AG04449 (cell line): ENCODE measurements at regions of chr7 and their contacts with region 1.

Region 1: DNA sequence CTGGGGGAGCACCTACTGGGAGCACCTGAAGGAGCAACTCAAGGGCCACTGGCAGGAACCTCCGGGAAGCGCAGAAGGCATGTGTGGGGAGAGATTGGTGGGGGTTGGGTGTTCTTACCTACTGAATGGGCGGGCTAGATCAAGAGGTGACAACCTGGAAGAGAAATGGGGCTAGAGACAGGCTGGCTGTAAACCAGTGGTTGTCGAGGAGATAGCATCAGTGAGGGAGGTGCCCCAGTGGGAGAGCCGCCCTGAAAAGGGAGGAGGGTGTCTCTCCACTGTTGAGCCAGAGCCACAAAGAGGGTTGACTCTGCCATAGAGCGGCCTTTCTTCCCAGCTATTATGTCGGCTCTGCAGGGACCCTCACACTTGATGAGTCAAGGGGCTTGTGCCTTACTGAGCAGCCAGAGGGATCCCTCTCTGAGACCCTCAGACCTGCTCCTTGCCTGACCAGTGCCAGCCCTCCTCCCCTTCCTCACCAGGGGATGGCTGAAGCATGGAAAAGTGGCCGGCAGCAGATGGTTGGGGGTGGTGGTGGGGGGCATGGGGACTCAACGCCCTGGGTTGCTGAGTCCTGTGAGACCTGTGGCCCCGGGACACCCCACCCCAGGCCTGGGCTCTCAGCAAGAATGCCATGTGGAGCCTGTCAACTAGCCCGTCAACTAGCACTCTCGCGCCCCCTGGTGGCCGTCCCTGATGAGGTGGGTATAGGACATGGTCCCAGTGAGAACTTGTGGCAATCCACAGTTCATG is 36.5 kb upstream of the PURB start:
- DNase-seq: no peak
- H3K4me3 ChIP-seq: no peak overlapping the region
- CTCF ChIP-seq: peak; percentile 92

Region 2: GRCh38 chr7:44145969-44146911 is 775.5 kb before region 1 on chr7:
- CTCF ChIA-PET with region 1: no interaction called
- POLR2A ChIA-PET with region 1: no interaction called
- DNase-seq: no peak
- H3K4me3 ChIP-seq: peak overlapping the region; percentile 49
- CTCF ChIP-seq: no peak

Region 3: GRCh38 chr7:44897309-44897708 is 24.5 kb before region 1 on chr7:
- CTCF ChIA-PET with region 1: interaction called, 12 read pairs
- POLR2A ChIA-PET with region 1: no interaction called
- DNase-seq: no peak
- H3K4me3 ChIP-seq: no peak overlapping the region
- CTCF ChIP-seq: no peak